CD4-positive, alpha-beta T cell (primary cell): ENCODE measurements at regions of chr19 and their contacts with region 1.

Region 1: GRCh38 chr19:47112997-47113849 is at the start of gene ZC3H4:
- DNase-seq: peak; percentile 98 to 100 (median 99)
- ATAC-seq: peak; percentile 82
- H3K4me3 ChIP-seq: peak within 1 kb of the TSS; percentile 82
- H3K4me3 Mint-ChIP-seq: peak within 1 kb of the TSS; percentile 98
- H3K27ac ChIP-seq: peak within 1 kb of the TSS; percentile 99 to 100
- H3K27ac Mint-ChIP-seq: peak within 1 kb of the TSS; percentile 98
- H3K4me1 ChIP-seq: peaks cover 24% of the 10 kb centered on the region
- H3K4me1 Mint-ChIP-seq: peaks cover 37% of the 10 kb centered on the region
- H3K27me3 ChIP-seq: no peaks in the 10 kb centered on the region
- H3K27me3 Mint-ChIP-seq: no peaks in the 10 kb centered on the region
- CTCF ChIP-seq: no peak
- total RNA-seq, gene ZC3H4: 39.4 to 43.7 TPM

Region 2: DNA sequence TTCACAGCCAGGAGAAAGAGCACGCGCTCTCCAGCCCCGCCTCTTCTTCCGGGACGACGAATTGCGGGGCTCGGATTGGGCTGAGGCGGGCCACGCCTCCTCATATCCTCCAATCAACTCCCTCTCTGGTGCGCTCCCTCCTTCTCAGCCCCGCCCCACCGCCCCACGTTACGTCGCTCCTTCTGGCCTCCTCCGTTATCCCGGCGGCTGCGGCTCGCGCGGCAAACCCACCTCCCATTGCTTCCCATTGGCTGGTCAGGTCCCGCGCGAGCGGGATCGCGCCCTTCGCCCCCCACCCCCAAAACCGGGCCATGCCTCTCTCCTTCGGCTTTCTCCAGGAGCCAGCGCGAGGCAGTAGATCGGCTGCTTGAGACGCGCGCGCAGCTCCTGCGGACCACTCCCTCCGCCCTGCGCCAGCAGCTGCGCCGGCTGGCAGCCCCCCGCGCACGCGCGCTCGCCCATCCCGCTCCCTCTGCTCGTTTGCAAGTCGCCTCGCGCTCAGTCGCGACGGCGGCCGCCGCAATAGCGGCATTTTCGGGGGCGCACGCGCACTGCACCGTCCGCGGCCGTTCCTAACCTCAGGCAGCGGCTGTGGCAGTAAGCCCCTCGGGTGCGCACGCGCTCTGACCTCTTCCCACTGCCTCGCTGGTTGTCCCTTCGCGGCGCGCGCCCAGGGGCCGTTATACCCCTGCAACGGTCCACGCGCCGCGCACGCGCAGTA is 252.9 kb before region 1 on chr19:
- CTCF ChIA-PET with region 1: no interaction called
- POLR2A ChIA-PET with region 1: interaction called, 6 read pairs
- intact Hi-C with region 1: loop called in 1 of 2 experiments (anchors 5 kb)
- DNase-seq: peak; percentile 86 to 98 (median 92)
- ATAC-seq: peak; percentile 77
- H3K4me3 ChIP-seq: peak overlapping the region; percentile 62
- H3K4me3 Mint-ChIP-seq: peak overlapping the region; percentile 95
- H3K27ac ChIP-seq: peak overlapping the region; percentile 77 to 91
- H3K27ac Mint-ChIP-seq: peak overlapping the region; percentile 84
- H3K4me1 ChIP-seq: peaks cover 49% of the 10 kb centered on the region
- H3K4me1 Mint-ChIP-seq: peaks cover 16% of the 10 kb centered on the region
- H3K27me3 ChIP-seq: no peaks in the 10 kb centered on the region
- H3K27me3 Mint-ChIP-seq: no peaks in the 10 kb centered on the region
- CTCF ChIP-seq: no peak

Region 3: DNA sequence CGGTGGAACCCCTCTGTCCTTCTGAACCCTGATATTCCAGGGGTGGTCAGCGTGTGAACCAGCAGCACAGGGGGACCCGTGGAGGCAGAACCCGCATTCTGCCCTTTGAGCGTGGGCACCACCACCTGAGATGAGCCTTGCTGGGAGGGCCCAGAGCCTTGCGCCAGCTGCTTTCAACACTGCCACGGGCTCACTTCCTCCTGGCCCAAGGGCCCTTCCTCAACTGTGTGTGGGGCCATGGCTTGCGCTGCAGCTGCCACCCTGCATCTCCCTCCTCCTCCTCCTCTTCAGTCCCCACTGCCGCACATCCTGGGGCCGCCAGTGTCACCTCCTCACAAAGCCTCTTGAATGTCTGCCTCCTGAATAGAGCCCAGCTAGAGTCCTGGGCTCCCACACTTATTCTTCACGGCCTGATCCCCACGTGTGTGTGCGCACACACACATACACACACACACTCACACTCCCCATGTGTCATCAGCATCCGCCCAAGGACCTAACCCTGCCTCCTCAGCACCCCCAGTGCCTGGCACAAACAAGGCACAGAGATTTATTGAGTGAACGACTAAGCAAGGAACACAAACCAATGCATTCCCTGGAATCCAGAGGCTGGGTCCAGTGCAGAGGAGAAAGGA is 37.9 kb before region 1 on chr19:
- CTCF ChIA-PET with region 1: interaction called, 13 read pairs
- POLR2A ChIA-PET with region 1: interaction called, 21 read pairs
- intact Hi-C with region 1: loop called in 1 of 2 experiments (anchors 5 kb)
- DNase-seq: peak in 2 of 14 experiments; percentile 24 to 39
- ATAC-seq: no peak
- H3K4me3 ChIP-seq: no peak overlapping the region
- H3K4me3 Mint-ChIP-seq: no peak overlapping the region
- H3K27ac ChIP-seq: no peak overlapping the region
- H3K27ac Mint-ChIP-seq: no peak overlapping the region
- H3K4me1 ChIP-seq: peaks cover 4% of the 10 kb centered on the region
- H3K4me1 Mint-ChIP-seq: peaks cover 6% of the 10 kb centered on the region
- H3K27me3 ChIP-seq: no peaks in the 10 kb centered on the region
- H3K27me3 Mint-ChIP-seq: no peaks in the 10 kb centered on the region
- CTCF ChIP-seq: no peak

Region 4: DNA sequence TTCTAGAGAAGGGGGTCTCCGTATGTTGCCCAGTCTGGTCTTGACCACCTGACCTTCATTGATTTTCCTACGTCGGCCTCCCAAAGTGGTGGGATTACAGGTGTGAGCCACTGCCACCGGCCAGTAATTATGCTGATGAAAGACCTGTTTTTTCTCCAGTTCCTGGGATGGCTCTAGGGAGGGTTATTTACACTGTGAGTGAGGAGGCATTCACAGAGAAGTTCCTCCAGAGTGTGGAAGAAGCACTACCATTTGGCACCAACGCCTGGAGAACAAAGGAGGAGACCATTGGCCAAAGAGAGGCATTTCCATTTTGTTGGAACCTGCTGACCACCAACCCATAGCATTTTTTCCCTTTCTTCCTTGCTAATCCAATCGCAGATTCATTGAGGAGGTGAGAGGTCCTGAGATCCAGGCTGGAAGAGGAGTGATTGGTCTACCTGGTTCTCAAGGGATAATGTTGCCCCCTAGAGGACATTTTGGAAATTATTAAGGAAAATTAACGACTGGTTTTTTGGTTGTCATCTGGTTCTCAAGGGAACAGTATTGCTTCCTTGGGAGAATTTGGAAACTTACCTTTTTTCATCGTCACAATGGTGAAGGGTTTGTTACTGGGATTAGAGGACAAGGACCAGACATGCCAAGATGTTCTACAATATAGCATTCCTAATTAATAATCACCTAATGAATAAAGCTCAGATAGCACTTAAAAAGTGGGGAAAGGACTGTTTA is 11.9 kb after region 1 on chr19:
- CTCF ChIA-PET with region 1: no interaction called
- POLR2A ChIA-PET with region 1: interaction called, 12 read pairs
- intact Hi-C with region 1: loop called in 1 of 2 experiments (anchors 2 kb)
- DNase-seq: peak in 5 of 14 experiments; percentile 26 to 80 (median 73)
- ATAC-seq: peak; percentile 59
- H3K4me3 ChIP-seq: no peak overlapping the region
- H3K4me3 Mint-ChIP-seq: peak overlapping the region; percentile 36
- H3K27ac ChIP-seq: no peak overlapping the region
- H3K27ac Mint-ChIP-seq: no peak overlapping the region
- H3K4me1 ChIP-seq: peaks cover 3% of the 10 kb centered on the region
- H3K4me1 Mint-ChIP-seq: peaks cover 4% of the 10 kb centered on the region
- H3K27me3 ChIP-seq: no peaks in the 10 kb centered on the region
- H3K27me3 Mint-ChIP-seq: no peaks in the 10 kb centered on the region
- CTCF ChIP-seq: peak; percentile 84

Region 5: GRCh38 chr19:47157431-47158321 is 44.5 kb after region 1 on chr19:
- CTCF ChIA-PET with region 1: no interaction called
- POLR2A ChIA-PET with region 1: interaction called, 26 read pairs
- intact Hi-C with region 1: no loop called
- DNase-seq: peak in 12 of 14 experiments; percentile 21 to 84 (median 42)
- ATAC-seq: peak; percentile 15
- H3K4me3 ChIP-seq: peak overlapping the region; percentile 31
- H3K4me3 Mint-ChIP-seq: peak overlapping the region; percentile 81
- H3K27ac ChIP-seq: peak overlapping the region; percentile 42 to 64
- H3K27ac Mint-ChIP-seq: peak overlapping the region; percentile 85
- H3K4me1 ChIP-seq: peaks cover 73% of the 10 kb centered on the region
- H3K4me1 Mint-ChIP-seq: peaks cover 71% of the 10 kb centered on the region
- H3K27me3 ChIP-seq: no peaks in the 10 kb centered on the region
- H3K27me3 Mint-ChIP-seq: no peaks in the 10 kb centered on the region
- CTCF ChIP-seq: no peak

Region 6: GRCh38 chr19:47243776-47244547 is 130.7 kb after region 1 on chr19:
- CTCF ChIA-PET with region 1: interaction called, 7 read pairs
- POLR2A ChIA-PET with region 1: interaction called, 25 read pairs
- intact Hi-C with region 1: no loop called
- DNase-seq: peak; percentile 72 to 95 (median 86)
- ATAC-seq: peak; percentile 42
- H3K4me3 ChIP-seq: peak overlapping the region; percentile 35
- H3K4me3 Mint-ChIP-seq: peak overlapping the region; percentile 85
- H3K27ac ChIP-seq: peak overlapping the region; percentile 45 to 65
- H3K27ac Mint-ChIP-seq: no peak overlapping the region
- H3K4me1 ChIP-seq: peaks cover 62% of the 10 kb centered on the region
- H3K4me1 Mint-ChIP-seq: peaks cover 15% of the 10 kb centered on the region
- H3K27me3 ChIP-seq: no peaks in the 10 kb centered on the region
- H3K27me3 Mint-ChIP-seq: no peaks in the 10 kb centered on the region
- CTCF ChIP-seq: peak; percentile 98

Region 7: DNA sequence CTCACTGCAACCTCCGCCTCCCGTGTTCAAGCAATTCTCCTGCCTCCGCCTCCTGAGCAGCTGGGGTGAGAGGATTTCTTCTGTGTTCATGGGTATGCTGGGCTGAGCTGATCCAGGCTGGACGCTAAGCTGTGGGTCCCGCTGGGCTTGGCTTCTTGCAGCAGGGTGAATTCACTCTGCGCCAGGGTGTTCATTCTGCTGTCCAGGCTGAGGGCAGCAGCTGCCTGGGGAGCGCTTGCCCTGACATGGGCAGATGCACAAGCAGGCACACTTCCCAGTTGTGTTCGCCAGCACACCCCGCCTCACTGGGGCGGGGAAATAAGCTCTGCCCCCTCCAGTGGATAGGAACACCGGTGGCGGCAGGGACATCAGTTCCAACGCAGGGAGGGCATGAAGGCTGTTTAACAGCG is 154.1 kb after region 1 on chr19:
- CTCF ChIA-PET with region 1: no interaction called
- POLR2A ChIA-PET with region 1: no interaction called
- intact Hi-C with region 1: no loop called
- DNase-seq: peak in 1 of 14 experiments; percentile 23
- ATAC-seq: no peak
- H3K4me3 ChIP-seq: no peak overlapping the region
- H3K4me3 Mint-ChIP-seq: no peak overlapping the region
- H3K27ac ChIP-seq: no peak overlapping the region
- H3K27ac Mint-ChIP-seq: no peak overlapping the region
- H3K4me1 ChIP-seq: peaks cover under 1% of the 10 kb centered on the region
- H3K4me1 Mint-ChIP-seq: peaks cover 2% of the 10 kb centered on the region
- H3K27me3 ChIP-seq: no peaks in the 10 kb centered on the region
- H3K27me3 Mint-ChIP-seq: no peaks in the 10 kb centered on the region
- CTCF ChIP-seq: no peak